AG04450 (cell line): ENCODE measurements at regions of chr6 and their contacts with region 1.

Region 1: DNA sequence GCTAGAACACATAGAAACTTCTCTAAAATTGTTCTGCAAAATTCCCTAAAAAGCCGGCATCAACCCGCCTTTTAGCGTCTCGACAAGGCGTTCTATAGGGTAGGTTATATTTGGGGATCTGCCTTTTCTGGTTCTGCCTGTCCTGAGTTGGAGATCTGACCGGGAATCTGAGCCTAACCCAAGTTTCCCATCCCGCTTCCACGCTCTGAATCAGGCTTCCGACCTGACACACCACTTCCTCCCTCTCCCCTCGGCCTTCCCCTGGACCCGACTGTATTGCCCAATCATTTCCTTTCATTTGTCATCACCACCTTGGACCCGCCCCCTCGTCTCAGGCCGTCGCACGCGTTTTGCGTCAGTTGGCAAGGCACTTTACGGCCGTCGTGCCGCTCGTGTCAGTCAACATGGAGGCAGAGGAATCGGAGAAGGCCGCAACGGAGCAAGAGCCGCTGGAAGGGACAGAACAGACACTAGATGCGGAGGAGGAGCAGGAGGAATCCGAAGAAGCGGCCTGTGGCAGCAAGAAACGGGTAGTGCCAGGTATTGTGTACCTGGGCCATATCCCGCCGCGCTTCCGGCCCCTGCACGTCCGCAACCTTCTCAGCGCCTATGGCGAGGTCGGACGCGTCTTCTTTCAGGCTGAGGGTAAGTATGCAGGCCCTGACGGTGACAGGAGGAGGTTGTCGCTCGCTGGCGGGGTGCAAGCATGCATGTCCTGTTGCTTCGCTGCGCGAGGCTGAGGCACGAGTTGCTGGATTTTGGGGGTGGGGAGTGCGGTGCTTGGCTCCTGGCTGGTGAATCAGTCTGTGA is at the start of gene ABT1:
- DNase-seq: peak; percentile 96
- H3K4me3 ChIP-seq: peak within 1 kb of the TSS; percentile 99
- H3K27ac ChIP-seq: peak within 1 kb of the TSS; percentile 66
- H3K27me3 ChIP-seq: no peaks in the 10 kb centered on the region
- CTCF ChIP-seq: no peak
- polyA plus RNA-seq, gene ABT1: 12.8 and 14.9 TPM in 2 replicates

Region 2: DNA sequence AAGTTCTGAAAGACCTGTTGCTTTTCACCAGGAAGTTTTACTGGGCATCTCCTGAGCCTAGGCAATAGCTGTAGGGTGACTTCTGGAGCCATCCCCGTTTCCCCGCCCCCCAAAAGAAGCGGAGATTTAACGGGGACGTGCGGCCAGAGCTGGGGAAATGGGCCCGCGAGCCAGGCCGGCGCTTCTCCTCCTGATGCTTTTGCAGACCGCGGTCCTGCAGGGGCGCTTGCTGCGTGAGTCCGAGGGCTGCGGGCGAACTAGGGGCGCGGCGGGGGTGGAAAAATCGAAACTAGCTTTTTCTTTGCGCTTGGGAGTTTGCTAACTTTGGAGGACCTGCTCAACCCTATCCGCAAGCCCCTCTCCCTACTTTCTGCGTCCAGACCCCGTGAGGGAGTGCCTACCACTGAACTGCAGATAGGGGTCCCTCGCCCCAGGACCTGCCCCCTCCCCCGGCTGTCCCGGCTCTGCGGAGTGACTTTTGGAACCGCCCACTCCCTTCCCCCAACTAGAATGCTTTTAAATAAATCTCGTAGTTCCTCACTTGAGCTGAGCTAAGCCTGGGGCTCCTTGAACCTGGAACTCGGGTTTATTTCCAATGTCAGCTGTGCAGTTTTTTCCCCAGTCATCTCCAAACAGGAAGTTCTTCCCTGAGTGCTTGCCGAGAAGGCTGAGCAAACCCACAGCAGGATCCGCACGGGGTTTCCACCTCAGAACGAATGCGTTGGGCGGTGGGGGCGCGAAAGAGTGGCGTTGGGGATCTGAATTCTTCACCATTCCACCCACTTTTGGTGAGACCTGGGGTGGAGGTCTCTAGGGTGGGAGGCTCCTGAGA is 509.3 kb before region 1 on chr6 and contains the start of gene HFE:
- CTCF ChIA-PET with region 1: no interaction called
- POLR2A ChIA-PET with region 1: no interaction called
- DNase-seq: no peak
- H3K4me3 ChIP-seq: peak within 1 kb of the TSS; percentile 77
- H3K27ac ChIP-seq: peak within 1 kb of the TSS; percentile 86
- H3K27me3 ChIP-seq: no peaks in the 10 kb centered on the region
- CTCF ChIP-seq: peak; percentile 24
- polyA plus RNA-seq, gene HFE: 19.5 and 21.4 TPM in 2 replicates

Region 3: GRCh38 chr6:26322645-26323482 is 273.9 kb before region 1 on chr6:
- CTCF ChIA-PET with region 1: interaction called, 23 read pairs
- POLR2A ChIA-PET with region 1: no interaction called
- DNase-seq: no peak
- H3K4me3 ChIP-seq: peak overlapping the region; percentile 69
- H3K27ac ChIP-seq: peak overlapping the region; percentile 76
- H3K27me3 ChIP-seq: no peaks in the 10 kb centered on the region
- CTCF ChIP-seq: no peak

Region 4: DNA sequence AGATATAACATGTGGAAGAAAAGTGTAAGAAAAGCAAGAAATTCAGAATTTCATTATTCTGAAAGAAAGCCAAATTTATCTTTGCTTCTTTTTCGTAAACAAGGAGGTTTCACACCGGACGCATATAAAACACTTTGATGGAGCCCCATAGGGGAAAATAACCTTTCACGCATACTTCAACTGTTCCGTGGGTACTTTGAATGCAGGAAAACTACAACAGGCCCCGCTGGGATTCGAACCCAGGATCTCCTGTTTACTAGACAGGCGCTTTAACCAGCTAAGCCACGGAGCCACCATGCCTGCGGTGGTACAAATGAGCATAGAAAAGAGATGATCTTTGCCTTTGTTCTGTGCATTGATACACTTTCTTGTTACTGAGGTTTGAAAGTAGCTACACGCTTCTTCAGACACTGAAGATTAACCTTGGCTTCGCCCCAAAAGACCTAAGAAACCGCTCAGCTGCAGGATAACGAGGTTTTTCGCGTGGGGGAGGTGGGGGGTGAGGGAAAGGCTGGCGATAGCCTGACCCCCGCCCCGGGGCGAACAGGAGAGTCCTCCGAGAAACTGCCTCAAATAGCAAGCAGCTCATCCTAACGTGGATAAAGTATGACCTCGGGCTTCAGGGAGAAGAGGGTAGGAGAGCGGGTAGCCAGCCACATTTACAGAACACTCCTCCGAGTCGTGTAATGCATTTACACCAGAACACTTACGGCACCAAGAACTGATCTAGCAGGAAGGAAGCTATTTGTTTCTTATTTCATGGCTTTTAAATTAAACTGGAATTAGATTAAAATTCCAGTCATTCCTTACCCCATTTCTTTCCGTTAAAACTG is 63.9 kb before region 1 on chr6:
- CTCF ChIA-PET with region 1: interaction called, 11 read pairs
- POLR2A ChIA-PET with region 1: no interaction called
- DNase-seq: peak; percentile 80
- H3K4me3 ChIP-seq: peak overlapping the region; percentile 76
- H3K27ac ChIP-seq: peak overlapping the region; percentile 67
- H3K27me3 ChIP-seq: no peaks in the 10 kb centered on the region
- CTCF ChIP-seq: no peak

Region 5: DNA sequence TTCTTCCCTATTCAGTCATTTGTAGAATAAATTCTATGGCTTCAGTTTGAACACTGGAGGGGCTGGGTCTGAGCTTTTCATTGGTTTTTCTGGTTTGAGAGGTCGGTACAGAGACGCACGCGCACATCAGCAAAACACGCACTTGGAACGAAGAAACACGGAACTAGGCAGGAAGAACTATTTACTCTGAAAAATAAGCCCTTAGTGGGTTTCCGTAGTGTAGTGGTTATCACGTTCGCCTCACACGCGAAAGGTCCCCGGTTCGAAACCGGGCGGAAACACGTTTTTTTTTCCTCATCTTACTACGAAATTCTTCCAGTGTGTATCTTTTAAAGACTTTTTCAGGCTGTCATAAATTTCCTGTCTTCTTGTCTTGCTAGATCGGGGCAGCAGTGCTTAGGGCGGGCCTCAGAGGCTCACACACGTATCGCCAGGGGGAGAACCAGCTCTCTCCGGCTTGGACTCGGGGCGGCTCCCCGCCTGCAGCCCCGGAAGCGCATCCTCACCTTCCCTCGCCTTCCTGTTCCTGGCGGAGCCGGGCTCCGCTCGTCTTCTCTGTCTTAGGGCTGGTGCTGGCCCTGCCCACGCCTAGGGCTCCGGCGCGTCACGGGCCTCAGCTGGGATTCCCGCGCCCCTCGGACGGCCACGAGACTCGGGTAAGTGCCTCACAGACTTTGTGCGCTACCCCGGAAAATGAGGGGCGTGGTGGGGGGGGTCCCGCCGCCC is 58.8 kb before region 1 on chr6 and contains the start of gene HMGN4:
- CTCF ChIA-PET with region 1: interaction called, 11 read pairs
- POLR2A ChIA-PET with region 1: no interaction called
- DNase-seq: peak; percentile 81
- H3K4me3 ChIP-seq: peak within 1 kb of the TSS; percentile 84
- H3K27ac ChIP-seq: peak within 1 kb of the TSS; percentile 93
- H3K27me3 ChIP-seq: no peaks in the 10 kb centered on the region
- CTCF ChIP-seq: peak; percentile 5; the same call in 1 of the 2 replicates
- polyA plus RNA-seq, gene HMGN4: 59.0 and 72.3 TPM in 2 replicates

Region 6: GRCh38 chr6:26553635-26554446 is 42.9 kb before region 1 on chr6:
- CTCF ChIA-PET with region 1: interaction called, 11 read pairs
- POLR2A ChIA-PET with region 1: no interaction called
- DNase-seq: peak; percentile 81
- H3K4me3 ChIP-seq: peak overlapping the region; percentile 62
- H3K27ac ChIP-seq: peak overlapping the region; percentile 62
- H3K27me3 ChIP-seq: no peaks in the 10 kb centered on the region
- CTCF ChIP-seq: no peak

Region 7: GRCh38 chr6:26563488-26563887 is 33.3 kb before region 1 on chr6:
- CTCF ChIA-PET with region 1: interaction called, 20 read pairs
- POLR2A ChIA-PET with region 1: no interaction called
- DNase-seq: no peak
- H3K4me3 ChIP-seq: no peak overlapping the region
- H3K27ac ChIP-seq: no peak overlapping the region
- H3K27me3 ChIP-seq: no peaks in the 10 kb centered on the region
- CTCF ChIP-seq: no peak